ENCODE measurements at regions of chr15 and their contacts with region 1.

Region 1: GRCh38 chr15:42137431-42138261 is 18.8 kb downstream of the PLA2G4F start:
- DNase-seq: no peak
- ATAC-seq: peak; percentile 69
- H3K4me3 Mint-ChIP-seq: no peak overlapping the region
- H3K27ac Mint-ChIP-seq: no peak overlapping the region
- H3K4me1 Mint-ChIP-seq: no peaks in the 10 kb centered on the region
- H3K27me3 Mint-ChIP-seq: no peaks in the 10 kb centered on the region
- CTCF ChIP-seq: 0 out of 2 replicates have a peak, but pooled peaks have one; percentile 13

Region 2: GRCh38 chr15:41779662-41780157 is 357.9 kb before region 1 on chr15:
- CTCF ChIA-PET with region 1: no interaction called
- POLR2A ChIA-PET with region 1: no interaction called
- DNase-seq: no peak
- ATAC-seq: no peak
- H3K4me3 Mint-ChIP-seq: no peak overlapping the region
- H3K27ac Mint-ChIP-seq: peak overlapping the region; percentile 71
- H3K4me1 Mint-ChIP-seq: peaks cover 51% of the 10 kb centered on the region
- H3K27me3 Mint-ChIP-seq: no peaks in the 10 kb centered on the region
- CTCF ChIP-seq: no peak

Region 3: DNA sequence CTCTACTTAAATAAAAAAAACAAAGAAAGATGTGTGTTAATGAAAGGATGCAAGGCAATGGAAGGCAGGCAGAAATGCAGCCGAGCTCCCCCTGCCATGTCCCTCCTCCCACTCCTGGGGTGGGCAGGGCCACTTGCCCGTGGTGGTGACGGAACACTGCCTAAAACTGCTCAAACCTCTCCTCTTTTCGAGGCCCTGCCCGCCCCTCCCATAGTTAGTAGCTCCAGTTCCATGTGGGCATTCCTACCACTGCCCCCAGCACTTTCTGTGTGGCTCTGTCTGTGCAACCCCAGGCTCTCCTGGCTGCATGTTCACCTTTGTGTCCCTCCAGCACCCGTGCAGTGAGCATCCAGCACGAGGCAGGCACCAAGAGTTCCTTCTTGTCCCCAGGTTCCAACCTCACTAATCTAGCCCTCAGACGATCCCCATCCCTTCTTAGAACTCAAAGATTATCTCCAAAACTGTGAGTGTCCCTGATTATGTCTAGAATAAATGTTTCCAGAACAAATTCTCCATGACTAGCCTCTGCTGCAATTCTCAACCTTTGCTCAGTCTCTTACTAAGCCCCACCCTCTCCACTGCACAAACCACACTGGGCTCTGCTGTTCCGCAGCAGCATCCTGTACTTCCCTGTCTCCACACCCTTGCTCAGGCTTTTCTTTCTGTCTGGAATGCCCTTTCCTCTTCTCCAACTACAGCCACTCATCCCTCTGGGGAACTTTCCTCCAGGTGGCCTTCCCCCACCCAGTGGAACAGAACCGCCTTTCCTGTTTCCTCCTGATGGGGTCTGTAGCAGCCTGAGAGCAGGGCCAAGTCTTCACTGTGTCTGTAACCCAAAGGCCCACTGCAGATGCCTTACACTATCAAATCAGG is 211.2 kb before region 1 on chr15:
- CTCF ChIA-PET with region 1: no interaction called
- POLR2A ChIA-PET with region 1: no interaction called
- DNase-seq: no peak
- ATAC-seq: peak; percentile 78
- H3K4me3 Mint-ChIP-seq: no peak overlapping the region
- H3K27ac Mint-ChIP-seq: peak overlapping the region; percentile 46
- H3K4me1 Mint-ChIP-seq: peaks cover 28% of the 10 kb centered on the region
- H3K27me3 Mint-ChIP-seq: no peaks in the 10 kb centered on the region
- CTCF ChIP-seq: no peak

Region 4: DNA sequence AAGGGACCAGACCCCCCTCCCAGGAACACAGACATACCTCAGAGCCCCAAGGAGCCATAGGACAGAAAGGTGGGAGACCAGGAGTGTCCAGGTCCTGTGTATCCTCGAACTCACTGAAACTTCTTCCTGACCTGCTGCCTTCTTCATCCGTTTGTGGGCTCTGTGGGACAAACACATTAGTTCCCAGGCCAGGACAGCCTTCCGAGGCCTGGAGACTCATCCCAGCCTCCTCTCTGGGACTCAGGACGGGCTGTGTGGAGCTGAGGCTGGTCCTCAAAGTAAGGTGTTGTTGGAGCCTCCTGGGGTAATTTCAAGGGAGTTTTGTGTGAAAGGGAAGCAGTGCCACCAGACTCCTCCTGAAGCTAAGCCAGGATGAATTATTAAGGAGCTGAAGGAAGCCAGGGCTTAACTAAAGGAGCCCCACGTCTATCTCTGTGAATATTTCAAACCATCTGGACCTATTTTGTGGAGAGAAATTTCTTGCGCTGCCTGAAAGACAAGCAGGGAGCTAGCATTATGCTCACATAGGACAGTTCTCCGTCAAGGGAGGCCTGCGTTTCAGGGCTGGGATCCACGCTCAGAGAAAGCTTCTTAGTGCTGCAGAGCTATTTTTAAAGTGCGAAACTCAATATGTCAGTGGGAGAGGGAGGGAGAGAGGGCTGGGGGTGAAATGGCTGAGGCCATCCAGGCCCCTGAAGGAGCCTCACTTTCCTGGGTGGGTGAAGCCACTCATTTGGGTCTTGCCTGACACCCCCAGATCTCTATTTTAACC is 87.0 kb before region 1 on chr15:
- CTCF ChIA-PET with region 1: interaction called, 13 read pairs
- POLR2A ChIA-PET with region 1: no interaction called
- DNase-seq: no peak
- ATAC-seq: no peak
- H3K4me3 Mint-ChIP-seq: no peak overlapping the region
- H3K27ac Mint-ChIP-seq: no peak overlapping the region
- H3K4me1 Mint-ChIP-seq: peaks cover 16% of the 10 kb centered on the region
- H3K27me3 Mint-ChIP-seq: no peaks in the 10 kb centered on the region
- CTCF ChIP-seq: no peak

Region 5: GRCh38 chr15:42065033-42065432 is 72.6 kb before region 1 on chr15:
- CTCF ChIA-PET with region 1: interaction called, 97 read pairs
- POLR2A ChIA-PET with region 1: interaction called, 3 read pairs
- DNase-seq: no peak
- ATAC-seq: 0 out of 2 replicates have a peak, but pooled peaks have one; percentile 15
- H3K4me3 Mint-ChIP-seq: no peak overlapping the region
- H3K27ac Mint-ChIP-seq: no peak overlapping the region
- H3K4me1 Mint-ChIP-seq: peaks cover 5% of the 10 kb centered on the region
- H3K27me3 Mint-ChIP-seq: no peaks in the 10 kb centered on the region; the same call in 1 of the 2 replicates
- CTCF ChIP-seq: no peak

Region 6: DNA sequence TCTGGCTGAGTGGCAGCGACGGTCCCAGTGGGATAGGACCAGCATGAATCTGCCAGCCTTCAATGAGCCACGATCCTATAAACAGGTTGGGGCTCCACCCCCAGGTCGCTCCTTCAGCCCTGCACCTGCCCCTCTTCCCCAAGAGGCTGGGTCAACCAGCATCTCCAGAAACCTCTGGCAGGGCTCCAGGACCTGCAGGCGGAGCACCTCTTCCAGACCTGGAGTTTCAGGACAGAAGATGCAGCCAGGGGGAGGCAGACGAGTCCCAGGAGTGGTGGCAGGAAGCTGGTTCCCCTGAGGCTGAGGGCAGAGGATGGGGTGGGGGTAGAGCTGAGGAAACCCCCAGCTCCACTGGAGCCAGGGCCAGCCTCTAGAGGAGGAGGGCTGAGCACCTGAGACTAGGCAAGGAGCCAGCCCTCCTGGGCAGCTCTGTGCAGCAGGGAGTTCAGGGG is 43.1 kb before region 1 on chr15 and contains the start of gene PLA2G4D:
- CTCF ChIA-PET with region 1: interaction called, 28 read pairs
- POLR2A ChIA-PET with region 1: no interaction called
- DNase-seq: no peak
- ATAC-seq: peak; percentile 60
- H3K4me3 Mint-ChIP-seq: no peak within 1 kb of the TSS
- H3K27ac Mint-ChIP-seq: no peak within 1 kb of the TSS
- H3K4me1 Mint-ChIP-seq: peaks cover 18% of the 10 kb centered on the region
- H3K27me3 Mint-ChIP-seq: no peaks in the 10 kb centered on the region; the same call in 1 of the 2 replicates
- CTCF ChIP-seq: no peak
- total RNA-seq, gene PLA2G4D: 0.07 to 0.24 TPM (median 0.09 TPM) in 3 replicates

Region 7: GRCh38 chr15:42118650-42119445 is 18.8 kb before region 1 on chr15:
- CTCF ChIA-PET with region 1: interaction called, 23 read pairs
- POLR2A ChIA-PET with region 1: no interaction called
- DNase-seq: no peak
- ATAC-seq: peak; percentile 90
- H3K4me3 Mint-ChIP-seq: 0 out of 2 replicates have a peak overlapping the region, but pooled peaks have one; percentile 4
- H3K27ac Mint-ChIP-seq: no peak overlapping the region
- H3K4me1 Mint-ChIP-seq: peaks cover 13% of the 10 kb centered on the region
- H3K27me3 Mint-ChIP-seq: peaks cover 4% of the 10 kb centered on the region; the same call in 1 of the 2 replicates
- CTCF ChIP-seq: no peak

Region 8: GRCh38 chr15:42270551-42270950 is 132.9 kb after region 1 on chr15:
- CTCF ChIA-PET with region 1: no interaction called
- POLR2A ChIA-PET with region 1: no interaction called
- DNase-seq: no peak
- ATAC-seq: no peak
- H3K4me3 Mint-ChIP-seq: no peak overlapping the region
- H3K27ac Mint-ChIP-seq: no peak overlapping the region
- H3K4me1 Mint-ChIP-seq: peaks cover 25% of the 10 kb centered on the region
- H3K27me3 Mint-ChIP-seq: no peaks in the 10 kb centered on the region
- CTCF ChIP-seq: no peak

Region 9: DNA sequence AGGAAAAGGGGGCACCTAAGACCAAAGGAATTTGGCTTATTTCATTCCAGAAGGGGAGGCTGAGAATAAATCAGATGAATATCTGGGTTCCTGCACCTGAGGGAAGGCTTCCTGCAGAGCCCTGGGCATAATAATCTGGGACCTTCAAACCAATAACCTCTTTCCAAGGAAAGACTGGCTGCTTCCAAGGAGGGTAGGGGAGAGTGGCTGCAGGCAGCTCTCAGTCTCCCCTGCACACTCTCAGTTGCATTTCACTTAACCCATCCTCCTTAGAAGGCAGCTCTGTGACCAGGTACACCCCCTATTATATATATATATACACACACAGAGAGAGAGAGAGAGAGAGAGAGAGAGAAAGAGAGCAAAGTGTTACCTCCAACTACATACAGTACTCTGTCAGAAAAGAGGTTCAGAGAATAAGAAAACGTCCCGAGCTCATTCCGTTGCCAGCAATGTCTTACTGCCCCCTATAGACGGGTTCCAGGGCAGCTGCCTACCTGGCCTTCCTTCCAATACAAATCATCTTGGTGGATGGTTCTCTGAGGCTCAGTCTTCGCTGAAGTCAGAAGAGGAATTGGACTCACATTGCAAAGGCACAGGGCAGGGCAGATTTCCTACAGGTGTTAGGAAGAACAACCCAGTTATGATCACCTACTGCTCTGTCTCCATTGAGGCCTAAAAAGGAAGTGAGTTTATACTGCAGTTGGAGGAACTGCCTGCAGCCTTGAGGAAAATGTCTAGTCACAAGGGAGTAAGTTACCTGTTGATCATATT is 247.7 kb after region 1 on chr15:
- CTCF ChIA-PET with region 1: interaction called, 41 read pairs
- POLR2A ChIA-PET with region 1: interaction called, 3 read pairs
- DNase-seq: peak; percentile 77
- ATAC-seq: peak; percentile 85
- H3K4me3 Mint-ChIP-seq: no peak overlapping the region
- H3K27ac Mint-ChIP-seq: no peak overlapping the region; the same call in 1 of the 2 replicates
- H3K4me1 Mint-ChIP-seq: peaks cover 29% of the 10 kb centered on the region
- H3K27me3 Mint-ChIP-seq: peaks cover 18% of the 10 kb centered on the region
- CTCF ChIP-seq: peak; percentile 51; the same call in 1 of the 2 replicates

Region 10: DNA sequence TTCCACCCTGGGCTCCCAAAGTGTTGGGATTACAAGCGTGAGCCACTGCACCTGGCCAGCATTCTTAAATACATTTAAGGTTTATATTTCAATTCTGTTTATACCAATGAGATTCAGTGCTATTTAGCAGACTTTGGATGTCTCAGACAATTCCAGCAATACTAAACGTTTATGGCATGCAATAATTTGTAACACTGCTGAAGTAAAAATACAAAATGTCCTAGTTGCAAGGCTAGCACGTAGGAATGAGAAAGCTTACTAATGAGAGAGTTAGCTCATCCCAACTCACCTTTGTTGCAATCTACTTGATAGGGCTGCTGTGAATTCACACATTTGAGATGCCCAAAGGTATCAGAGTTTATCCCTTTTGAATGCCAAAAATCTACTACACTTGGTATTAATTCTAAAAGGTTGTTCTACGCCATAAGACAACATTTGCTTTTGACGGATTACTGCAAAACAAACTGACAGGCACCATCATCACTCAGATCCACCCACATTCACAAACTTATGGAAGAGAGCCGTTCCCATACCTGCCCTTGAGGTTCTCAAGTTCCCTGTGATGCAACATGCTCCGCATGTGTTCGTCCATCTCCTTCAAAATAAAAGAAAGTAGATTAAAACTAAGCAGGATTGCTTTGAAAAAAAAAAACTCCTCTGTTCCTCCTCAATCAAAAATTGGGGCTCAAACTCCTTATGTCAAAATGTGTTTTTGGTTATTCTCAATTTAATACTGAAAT is 328.0 kb after region 1 on chr15:
- CTCF ChIA-PET with region 1: no interaction called
- POLR2A ChIA-PET with region 1: no interaction called
- DNase-seq: no peak
- ATAC-seq: no peak
- H3K4me3 Mint-ChIP-seq: no peak overlapping the region
- H3K27ac Mint-ChIP-seq: no peak overlapping the region
- H3K4me1 Mint-ChIP-seq: no peaks in the 10 kb centered on the region
- H3K27me3 Mint-ChIP-seq: no peaks in the 10 kb centered on the region
- CTCF ChIP-seq: no peak

Measured in WTC11 (cell line).